ENCODE measurements at regions of chr6 and their contacts with region 1.

Region 1: GRCh38 chr6:28683944-28684538 is 158.4 kb downstream of the GPX5 start:
- DNase-seq: peak; percentile 64
- H3K4me3 Mint-ChIP-seq: no peak overlapping the region
- H3K27ac Mint-ChIP-seq: no peak overlapping the region
- H3K4me1 Mint-ChIP-seq: peaks cover 15% of the 10 kb centered on the region
- H3K27me3 Mint-ChIP-seq: peaks cover 70% of the 10 kb centered on the region

Region 2: GRCh38 chr6:28496099-28496779 is 187.8 kb before region 1 on chr6:
- intact Hi-C with region 1: loop called (anchors 1 kb)
- DNase-seq: no peak
- H3K4me3 Mint-ChIP-seq: no peak overlapping the region
- H3K27ac Mint-ChIP-seq: no peak overlapping the region
- H3K4me1 Mint-ChIP-seq: no peaks in the 10 kb centered on the region
- H3K27me3 Mint-ChIP-seq: peaks cover 35% of the 10 kb centered on the region

Region 3: GRCh38 chr6:29589423-29590048 is 905.5 kb after region 1 on chr6:
- intact Hi-C with region 1: loop called (anchors 1 kb)
- DNase-seq: peak; percentile 86
- H3K4me3 Mint-ChIP-seq: no peak overlapping the region
- H3K27ac Mint-ChIP-seq: no peak overlapping the region
- H3K4me1 Mint-ChIP-seq: no peaks in the 10 kb centered on the region
- H3K27me3 Mint-ChIP-seq: peaks cover 43% of the 10 kb centered on the region

Measured in activated CD4-positive, alpha-beta T cell treated with anti-CD3 and anti-CD28 coated beads, Interleukin-2, amount 10 ng/mL, durations not matched to agents 24 days and 14 days (primary cell).